ENCODE measurements at regions of chr10 and their contacts with region 1.

Region 1: GRCh38 chr10:33134011-33134751 is 176.2 kb upstream of the ITGB1 start:
- DNase-seq: peak; percentile 83
- H3K4me3 Mint-ChIP-seq: peak overlapping the region; percentile 29
- H3K27ac Mint-ChIP-seq: peak overlapping the region; percentile 87
- H3K4me1 Mint-ChIP-seq: peaks cover 50% of the 10 kb centered on the region
- H3K27me3 Mint-ChIP-seq: peaks cover 2% of the 10 kb centered on the region

Region 2: DNA sequence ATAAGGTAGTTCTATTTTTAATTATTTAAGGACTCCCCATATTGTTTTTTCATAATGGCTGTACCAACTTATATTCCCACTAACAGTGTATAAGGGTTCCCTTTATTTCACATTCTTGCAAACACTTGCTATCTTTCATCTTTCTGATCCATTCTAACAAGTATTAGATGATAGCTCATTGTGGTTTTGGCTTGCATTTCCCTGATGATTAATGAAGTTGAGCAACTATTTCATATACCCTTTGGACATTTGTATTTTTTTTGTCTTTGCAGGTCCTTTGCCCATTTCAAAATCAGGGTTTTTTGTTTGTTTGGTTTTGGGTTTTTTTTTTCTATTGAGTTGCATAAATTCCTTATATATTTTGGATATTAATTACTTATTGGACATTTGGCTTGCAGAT is 894.4 kb before region 1 on chr10:
- intact Hi-C with region 1: loop called (anchors 2 kb)
- DNase-seq: no peak
- H3K4me3 Mint-ChIP-seq: no peak overlapping the region
- H3K27ac Mint-ChIP-seq: no peak overlapping the region
- H3K4me1 Mint-ChIP-seq: peaks cover 10% of the 10 kb centered on the region
- H3K27me3 Mint-ChIP-seq: no peaks in the 10 kb centered on the region

Region 3: GRCh38 chr10:32378363-32379317 is 755.5 kb before region 1 on chr10:
- intact Hi-C with region 1: loop called (anchors 5 kb)
- DNase-seq: peak; percentile 97
- H3K4me3 Mint-ChIP-seq: no peak overlapping the region
- H3K27ac Mint-ChIP-seq: no peak overlapping the region
- H3K4me1 Mint-ChIP-seq: peaks cover 18% of the 10 kb centered on the region
- H3K27me3 Mint-ChIP-seq: no peaks in the 10 kb centered on the region

Region 4: GRCh38 chr10:32938554-32939061 is 195.6 kb before region 1 on chr10:
- intact Hi-C with region 1: no loop called
- DNase-seq: no peak
- H3K4me3 Mint-ChIP-seq: no peak overlapping the region
- H3K27ac Mint-ChIP-seq: no peak overlapping the region
- H3K4me1 Mint-ChIP-seq: peaks cover 14% of the 10 kb centered on the region
- H3K27me3 Mint-ChIP-seq: no peaks in the 10 kb centered on the region

Region 5: GRCh38 chr10:33008499-33009243 is 125.5 kb before region 1 on chr10:
- intact Hi-C with region 1: loop called (anchors 5 kb)
- DNase-seq: peak; percentile 88
- H3K4me3 Mint-ChIP-seq: peak overlapping the region; percentile 79
- H3K27ac Mint-ChIP-seq: peak overlapping the region; percentile 45
- H3K4me1 Mint-ChIP-seq: peaks cover 19% of the 10 kb centered on the region
- H3K27me3 Mint-ChIP-seq: peaks cover 11% of the 10 kb centered on the region

Region 6: GRCh38 chr10:33115738-33116719 is 18.2 kb before region 1 on chr10:
- intact Hi-C with region 1: loop called (anchors 1 kb)
- DNase-seq: no peak
- H3K4me3 Mint-ChIP-seq: no peak overlapping the region
- H3K27ac Mint-ChIP-seq: peak overlapping the region; percentile 32
- H3K4me1 Mint-ChIP-seq: peaks cover 45% of the 10 kb centered on the region
- H3K27me3 Mint-ChIP-seq: no peaks in the 10 kb centered on the region

Region 7: DNA sequence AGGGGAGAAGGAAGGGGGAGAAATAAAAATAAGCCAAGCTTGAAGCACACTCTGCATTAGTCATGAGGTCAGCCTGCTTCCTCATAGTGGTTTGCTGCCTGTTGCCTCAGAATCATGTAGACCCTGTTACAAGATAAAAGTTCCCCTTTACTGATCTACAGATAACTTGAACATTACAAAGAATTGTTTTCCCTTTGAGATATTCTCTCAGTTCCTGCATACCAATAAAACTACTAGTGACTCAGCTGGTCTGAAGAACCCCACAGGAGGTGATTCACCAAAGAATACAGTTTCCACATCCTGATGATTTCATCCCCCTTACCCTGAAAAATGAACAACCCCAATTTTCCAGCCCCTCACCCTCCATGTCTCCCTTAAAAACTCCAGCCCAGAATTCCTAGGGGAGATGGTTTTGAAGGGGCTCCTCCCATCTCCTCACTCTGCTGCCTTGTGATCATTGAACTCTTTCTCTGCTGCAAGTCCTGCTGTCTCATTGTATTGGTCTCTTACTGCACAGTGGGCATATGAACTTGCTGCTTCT is 231.8 kb after region 1 on chr10:
- intact Hi-C with region 1: loop called (anchors 5 kb)
- DNase-seq: peak; percentile 57
- H3K4me3 Mint-ChIP-seq: no peak overlapping the region
- H3K27ac Mint-ChIP-seq: peak overlapping the region; percentile 86
- H3K4me1 Mint-ChIP-seq: peaks cover 15% of the 10 kb centered on the region
- H3K27me3 Mint-ChIP-seq: no peaks in the 10 kb centered on the region

Region 8: GRCh38 chr10:34280599-34281374 is 1146.6 kb after region 1 on chr10:
- intact Hi-C with region 1: loop called (anchors 5 kb)
- DNase-seq: peak; percentile 61
- H3K4me3 Mint-ChIP-seq: peak overlapping the region; percentile 39
- H3K27ac Mint-ChIP-seq: peak overlapping the region; percentile 83
- H3K4me1 Mint-ChIP-seq: peaks cover 25% of the 10 kb centered on the region
- H3K27me3 Mint-ChIP-seq: peaks cover 4% of the 10 kb centered on the region

Measured in activated CD4-positive, alpha-beta T cell treated with anti-CD3 and anti-CD28 coated beads, Interleukin-2, amount 10 ng/mL, durations not matched to agents 24 days and 14 days (primary cell).